SK-N-SH (cell line): ENCODE measurements at regions of chr1 and their contacts with region 1.

Region 1: GRCh38 chr1:39142401-39143151 is 61.9 kb upstream of the MACF1 start:
- DNase-seq: no peak
- H3K4me3 ChIP-seq: no peak overlapping the region
- H3K27ac ChIP-seq: peak overlapping the region in 1 of 2 experiments; percentile 12; a peak in 1 of 4 replicates
- H3K4me1 ChIP-seq: peaks cover 3 to 35% of the 10 kb centered on the region in 2 experiments; a peak in 2 of 4 replicates
- H3K27me3 ChIP-seq: no peaks in the 10 kb centered on the region
- CTCF ChIP-seq: no peak
- EP300 ChIP-seq: no peak
- RAD21 ChIP-seq: no peak

Region 2: GRCh38 chr1:39158327-39159086 is 15.9 kb after region 1 on chr1:
- CTCF ChIA-PET with region 1: interaction called, 11 read pairs
- POLR2A ChIA-PET with region 1: no interaction called
- DNase-seq: no peak
- H3K4me3 ChIP-seq: no peak overlapping the region
- H3K27ac ChIP-seq: peak overlapping the region in 1 of 2 experiments; percentile 77; a peak in 2 of 4 replicates
- H3K4me1 ChIP-seq: peaks cover 9 to 52% of the 10 kb centered on the region in 2 experiments; a peak in 3 of 4 replicates
- H3K27me3 ChIP-seq: no peaks in the 10 kb centered on the region
- CTCF ChIP-seq: no peak
- EP300 ChIP-seq: no peak
- RAD21 ChIP-seq: no peak

Region 3: DNA sequence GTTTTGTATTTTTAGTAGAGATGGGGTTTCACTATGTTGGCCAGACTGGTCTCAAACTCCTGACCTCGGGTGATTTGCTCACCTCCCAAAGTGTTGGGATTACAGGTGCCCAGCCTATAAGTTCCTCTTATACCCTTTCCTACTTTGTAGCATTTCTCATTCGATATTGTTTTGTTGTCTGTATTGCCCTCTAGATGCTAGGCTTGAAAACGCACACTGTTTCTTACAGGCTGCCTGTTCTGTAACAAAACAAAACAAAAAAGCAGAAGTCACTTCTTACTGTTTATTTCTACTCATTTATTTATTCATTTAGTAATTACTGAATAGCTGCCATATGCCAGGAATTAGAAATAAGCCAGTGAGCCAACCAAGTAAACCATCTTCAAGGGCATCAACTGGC is 212.0 kb after region 1 on chr1:
- CTCF ChIA-PET with region 1: no interaction called
- POLR2A ChIA-PET with region 1: no interaction called
- DNase-seq: no peak
- H3K4me3 ChIP-seq: no peak overlapping the region
- H3K27ac ChIP-seq: no peak overlapping the region
- H3K4me1 ChIP-seq: no peaks in the 10 kb centered on the region; a peak in 1 of 4 replicates
- H3K27me3 ChIP-seq: no peaks in the 10 kb centered on the region
- CTCF ChIP-seq: 0 out of 2 replicates have a peak, but pooled peaks have one; percentile 24
- EP300 ChIP-seq: no peak
- RAD21 ChIP-seq: peak; percentile 24

Region 4: DNA sequence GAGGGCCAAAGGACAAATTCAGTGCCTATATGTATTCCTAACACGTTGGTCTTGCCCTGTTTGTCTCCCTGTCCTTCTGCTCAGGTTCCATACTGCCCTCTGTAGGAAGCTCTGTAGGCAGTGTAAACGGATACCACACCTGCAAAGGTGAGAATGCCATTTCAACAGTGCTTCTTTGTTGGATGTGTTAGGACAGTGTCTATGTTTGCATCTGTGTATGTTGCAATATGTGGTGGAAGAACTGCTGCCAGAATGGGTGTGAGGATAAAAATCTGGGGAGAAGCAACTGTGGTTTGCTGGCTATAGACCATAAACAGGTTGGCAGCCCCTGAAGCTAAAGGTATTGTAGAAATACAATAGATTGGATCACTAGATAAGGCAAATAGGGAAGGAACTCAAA is 235.8 kb after region 1 on chr1:
- CTCF ChIA-PET with region 1: no interaction called
- POLR2A ChIA-PET with region 1: no interaction called
- DNase-seq: no peak
- H3K4me3 ChIP-seq: no peak overlapping the region
- H3K27ac ChIP-seq: no peak overlapping the region
- H3K4me1 ChIP-seq: no peaks in the 10 kb centered on the region
- H3K27me3 ChIP-seq: no peaks in the 10 kb centered on the region
- CTCF ChIP-seq: peak; percentile 35; the same call in 1 of the 2 replicates
- EP300 ChIP-seq: no peak
- RAD21 ChIP-seq: no peak

Region 5: DNA sequence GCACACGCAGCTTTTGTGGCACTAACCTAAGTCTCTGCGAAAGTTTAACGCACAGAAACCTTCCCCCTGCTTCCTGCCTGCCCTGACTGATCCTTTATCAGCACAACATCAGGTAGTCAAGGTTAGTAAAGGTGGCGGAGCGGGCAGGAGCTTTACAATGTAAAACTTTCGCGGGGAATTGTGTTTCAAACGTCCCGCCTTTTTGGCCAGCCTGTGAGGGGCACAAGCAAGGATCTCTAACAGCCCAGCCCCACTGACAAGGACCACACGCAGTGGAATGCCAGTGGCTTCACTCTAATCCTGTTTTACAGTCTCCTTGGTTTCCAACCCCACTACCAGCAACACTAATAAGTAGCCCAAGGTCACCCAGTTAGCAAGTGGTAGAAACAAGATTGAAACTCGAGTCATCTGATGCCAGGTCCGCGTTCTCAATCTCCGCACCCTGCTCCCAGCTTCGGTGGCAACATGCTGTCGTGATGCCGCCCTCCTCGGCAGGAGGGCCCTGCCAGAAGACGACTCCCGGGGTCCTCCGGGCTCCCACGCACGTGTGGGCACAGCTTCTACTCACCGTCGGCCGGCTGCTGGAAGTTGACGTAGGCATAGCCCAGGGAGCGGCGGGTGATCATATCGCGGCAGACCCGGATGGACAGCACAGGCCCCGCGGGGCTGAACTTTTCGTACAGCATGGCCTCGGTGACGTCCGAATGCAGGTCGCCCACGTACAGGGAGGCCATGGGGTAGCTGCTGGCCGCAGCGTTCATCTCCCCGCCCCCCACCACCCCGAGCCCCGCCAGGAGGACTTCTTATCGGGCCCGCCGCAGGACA is 432.8 kb after region 1 on chr1:
- CTCF ChIA-PET with region 1: no interaction called
- POLR2A ChIA-PET with region 1: no interaction called
- DNase-seq: peak; percentile 76
- H3K4me3 ChIP-seq: peak overlapping the region; percentile 75 to 89
- H3K27ac ChIP-seq: peak overlapping the region; percentile 65 to 74; a peak in 3 of 4 replicates
- H3K4me1 ChIP-seq: peaks cover 14 to 22% of the 10 kb centered on the region in 2 experiments
- H3K27me3 ChIP-seq: no peaks in the 10 kb centered on the region
- CTCF ChIP-seq: no peak
- EP300 ChIP-seq: no peak
- RAD21 ChIP-seq: no peak